HEK293 (cell line): ENCODE measurements at regions of chr11 and their contacts with region 1.

Region 1: DNA sequence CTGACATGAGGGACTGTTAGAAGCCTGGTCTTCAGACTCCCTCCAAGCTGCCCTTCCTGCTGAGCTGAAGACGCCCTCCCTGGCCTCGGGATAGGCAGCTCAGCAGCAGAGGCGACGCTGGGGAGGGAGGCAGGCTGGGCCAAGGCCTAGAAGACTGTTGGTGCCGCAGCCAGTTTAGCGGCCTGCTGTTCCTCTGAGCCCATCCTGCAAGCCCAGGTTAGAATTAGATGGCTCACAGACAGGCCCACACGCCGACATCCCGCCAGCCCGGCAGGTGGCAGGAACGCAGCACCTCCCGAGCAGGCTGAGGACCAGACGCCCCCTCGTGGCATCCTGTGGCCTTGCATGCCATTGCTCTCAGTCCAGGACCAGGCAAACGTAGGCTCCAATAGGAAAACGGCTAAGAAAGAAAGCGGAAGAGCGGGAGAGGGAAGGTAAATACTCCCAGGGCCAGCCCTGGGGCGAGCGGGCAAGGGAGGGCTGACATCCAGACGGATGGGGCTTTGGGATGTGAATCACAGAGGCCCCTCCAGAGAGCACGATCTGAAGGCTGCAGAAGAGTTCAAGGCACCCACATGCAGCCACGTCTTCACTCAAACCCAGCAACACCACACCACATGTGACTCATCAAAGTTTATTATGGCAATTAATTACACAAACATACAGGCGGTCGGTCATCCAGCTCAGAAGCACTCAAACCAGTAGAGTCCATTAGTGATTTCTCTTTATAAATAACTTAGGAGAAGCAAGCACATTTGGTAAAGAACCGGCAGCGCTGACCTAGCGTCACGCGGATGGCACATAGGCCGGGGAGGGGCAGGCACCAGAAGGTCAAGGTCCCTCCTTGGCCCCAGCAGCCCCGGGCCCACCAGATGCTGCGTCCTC is 27.6 kb downstream of the CD5 start:
- H3K4me3 ChIP-seq: no peak overlapping the region
- H3K27ac ChIP-seq: no peak overlapping the region
- H3K4me1 ChIP-seq: no peaks in the 10 kb centered on the region
- CTCF ChIP-seq: peak; percentile 98

Region 2: GRCh38 chr11:61116426-61117167 is 13.3 kb before region 1 on chr11:
- CTCF ChIA-PET with region 1: interaction called, 12 read pairs
- POLR2A ChIA-PET with region 1: no interaction called
- H3K4me3 ChIP-seq: no peak overlapping the region
- H3K27ac ChIP-seq: no peak overlapping the region
- H3K4me1 ChIP-seq: peaks cover 10% of the 10 kb centered on the region; the same call in 1 of the 2 replicates
- CTCF ChIP-seq: no peak

Region 3: GRCh38 chr11:61149624-61150619 is 20.0 kb after region 1 on chr11:
- CTCF ChIA-PET with region 1: interaction called, 11 read pairs
- POLR2A ChIA-PET with region 1: no interaction called
- H3K4me3 ChIP-seq: no peak overlapping the region
- H3K27ac ChIP-seq: no peak overlapping the region
- H3K4me1 ChIP-seq: no peaks in the 10 kb centered on the region
- CTCF ChIP-seq: no peak

Region 4: DNA sequence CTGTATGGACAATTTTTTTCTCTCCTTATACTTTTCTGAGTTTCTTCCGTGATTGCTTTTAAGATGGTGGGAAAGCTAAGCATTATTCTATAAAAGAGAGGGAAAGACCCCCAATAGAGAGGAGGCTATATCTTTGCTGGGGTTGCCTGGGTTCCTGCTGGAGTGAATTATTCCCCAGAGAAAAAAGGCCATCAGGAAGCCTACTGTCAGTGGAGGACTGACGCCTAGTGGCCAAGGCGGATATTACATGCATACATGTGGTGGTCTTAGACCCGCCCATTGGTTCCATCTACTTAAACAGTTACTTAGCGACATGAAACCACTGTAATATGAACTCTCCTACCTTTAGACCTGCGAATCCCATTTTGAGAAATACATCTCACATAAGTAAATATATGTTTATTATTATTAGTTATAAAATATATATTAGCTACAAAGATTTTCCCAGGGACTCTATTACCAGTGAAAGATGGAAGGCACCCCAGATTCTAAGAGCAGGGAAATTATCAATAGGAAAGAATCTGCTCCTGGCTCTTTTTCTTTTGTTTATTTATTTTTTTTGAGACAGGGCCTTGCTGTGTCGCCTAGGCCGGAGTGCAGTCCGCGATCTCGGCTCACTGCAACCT is 57.7 kb after region 1 on chr11:
- CTCF ChIA-PET with region 1: interaction called, 10 read pairs
- POLR2A ChIA-PET with region 1: no interaction called
- H3K4me3 ChIP-seq: no peak overlapping the region
- H3K27ac ChIP-seq: no peak overlapping the region
- H3K4me1 ChIP-seq: no peaks in the 10 kb centered on the region
- CTCF ChIP-seq: peak; percentile 32; the same call in 1 of the 2 replicates